Spleen (tissue), 13 donors: ENCODE measurements at regions of chr9 and their contacts with region 1.

Region 1: GRCh38 chr9:33721674-33722358 is 73.5 kb upstream of the PRSS3 start:
- DNase-seq: peak; percentile 96
- H3K4me3 ChIP-seq: peak overlapping the region in 1 of 8 donors; percentile 25
- H3K27ac ChIP-seq: no peak overlapping the region
- H3K4me1 ChIP-seq: peaks cover 0 to 31% (median 14%) of the 10 kb centered on the region in 6 donors
- H3K27me3 ChIP-seq: peaks cover 0 to 10% (median 0%) of the 10 kb centered on the region in 7 donors
- CTCF ChIP-seq: peak; percentile 98 to 100 (median 99)
- POLR2A ChIP-seq: no peak

Region 2: DNA sequence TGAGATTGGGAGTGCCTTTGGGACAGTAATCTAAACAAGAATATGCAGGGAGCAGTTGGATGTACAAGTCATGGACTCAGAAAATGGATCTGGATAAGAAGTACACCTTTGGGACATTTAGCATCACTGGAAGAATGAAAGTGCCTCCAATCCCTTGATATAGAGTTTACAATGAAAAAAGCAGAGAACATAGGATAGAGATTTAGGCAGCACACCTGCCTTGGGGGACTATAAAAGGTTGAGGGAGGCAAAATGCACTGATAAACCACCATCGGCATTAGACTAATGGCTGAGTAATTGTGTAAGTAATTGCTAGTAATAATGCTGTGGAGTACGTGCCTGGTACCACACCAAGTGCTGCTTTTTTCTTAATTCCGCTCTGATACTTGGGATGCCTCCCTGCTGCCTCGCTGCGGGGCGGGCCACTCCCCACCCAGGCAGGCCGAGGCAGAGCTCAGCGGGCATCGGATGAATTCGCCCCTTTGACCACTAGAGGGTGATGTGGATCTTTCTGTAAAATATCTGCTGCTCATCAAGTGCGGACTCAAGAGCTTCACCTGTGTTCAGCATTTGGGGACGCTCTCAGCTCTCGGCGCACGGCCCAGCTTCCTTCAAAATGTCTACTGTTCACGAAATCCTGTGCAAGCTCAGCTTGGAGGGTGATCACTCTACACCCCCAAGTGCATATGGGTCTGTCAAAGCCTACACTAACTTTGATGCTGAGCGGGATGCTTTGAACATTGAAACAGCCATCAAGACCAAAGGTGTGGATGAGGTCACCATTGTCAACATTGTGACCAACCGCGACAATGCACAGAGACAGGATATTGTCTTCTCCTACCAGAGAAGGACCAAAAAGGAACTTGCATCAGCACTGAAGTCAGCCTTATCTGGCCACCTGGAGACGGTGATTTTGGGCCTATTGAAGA is 97.9 kb before region 1 on chr9:
- intact Hi-C with region 1: loop called (anchors 2 kb)
- DNase-seq: peak; percentile 82
- H3K4me3 ChIP-seq: no peak overlapping the region
- H3K27ac ChIP-seq: no peak overlapping the region
- H3K4me1 ChIP-seq: peaks cover 0 to 6% (median 4%) of the 10 kb centered on the region in 6 donors
- H3K27me3 ChIP-seq: peaks cover 0 to 52% (median under 1%) of the 10 kb centered on the region in 7 donors
- CTCF ChIP-seq: peak; percentile 56 to 92 (median 86)
- POLR2A ChIP-seq: no peak

Region 3: GRCh38 chr9:33778700-33779351 is 57.0 kb after region 1 on chr9:
- intact Hi-C with region 1: no loop called
- DNase-seq: no peak
- H3K4me3 ChIP-seq: no peak overlapping the region
- H3K27ac ChIP-seq: no peak overlapping the region
- H3K4me1 ChIP-seq: peaks cover 0 to 6% (median 0%) of the 10 kb centered on the region in 6 donors
- H3K27me3 ChIP-seq: peaks cover 0 to 6% (median 0%) of the 10 kb centered on the region in 7 donors
- CTCF ChIP-seq: peak; percentile 18 to 74 (median 56)
- POLR2A ChIP-seq: no peak